ENCODE measurements at regions of chr19 and their contacts with region 1.

Region 1: DNA sequence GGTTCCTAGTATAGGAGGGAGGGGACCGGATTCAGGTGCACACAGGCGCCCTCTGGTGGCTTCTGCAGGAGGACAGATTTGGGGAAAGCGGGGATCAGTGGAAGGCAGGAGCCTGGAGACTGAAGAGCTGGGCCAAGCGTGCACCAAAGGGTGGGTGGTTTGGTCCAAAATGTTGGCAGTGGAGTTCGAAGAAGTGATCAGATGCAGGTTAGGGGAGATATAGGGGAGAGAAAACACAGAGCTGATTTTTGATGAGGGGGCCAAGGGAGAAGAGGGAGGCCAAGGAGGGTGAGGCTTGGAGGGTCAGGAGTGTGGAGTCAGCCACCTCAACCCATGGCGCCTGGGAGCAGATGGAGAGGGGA is 6.8 kb upstream of the CARM1 start:
- DNase-seq: peak; percentile 85
- H3K4me3 ChIP-seq: no peak overlapping the region
- H3K27ac ChIP-seq: no peak overlapping the region
- H3K4me1 ChIP-seq: peaks cover 8% of the 10 kb centered on the region
- H3K27me3 ChIP-seq: no peaks in the 10 kb centered on the region
- CTCF ChIP-seq: peak; percentile 97

Region 2: GRCh38 chr19:10551698-10552301 is 312.7 kb before region 1 on chr19:
- CTCF ChIA-PET with region 1: interaction called, 13 read pairs
- POLR2A ChIA-PET with region 1: no interaction called
- intact Hi-C with region 1: no loop called
- DNase-seq: peak; percentile 61
- H3K4me3 ChIP-seq: no peak overlapping the region
- H3K27ac ChIP-seq: no peak overlapping the region
- H3K4me1 ChIP-seq: no peaks in the 10 kb centered on the region
- H3K27me3 ChIP-seq: no peaks in the 10 kb centered on the region
- CTCF ChIP-seq: no peak

Region 3: DNA sequence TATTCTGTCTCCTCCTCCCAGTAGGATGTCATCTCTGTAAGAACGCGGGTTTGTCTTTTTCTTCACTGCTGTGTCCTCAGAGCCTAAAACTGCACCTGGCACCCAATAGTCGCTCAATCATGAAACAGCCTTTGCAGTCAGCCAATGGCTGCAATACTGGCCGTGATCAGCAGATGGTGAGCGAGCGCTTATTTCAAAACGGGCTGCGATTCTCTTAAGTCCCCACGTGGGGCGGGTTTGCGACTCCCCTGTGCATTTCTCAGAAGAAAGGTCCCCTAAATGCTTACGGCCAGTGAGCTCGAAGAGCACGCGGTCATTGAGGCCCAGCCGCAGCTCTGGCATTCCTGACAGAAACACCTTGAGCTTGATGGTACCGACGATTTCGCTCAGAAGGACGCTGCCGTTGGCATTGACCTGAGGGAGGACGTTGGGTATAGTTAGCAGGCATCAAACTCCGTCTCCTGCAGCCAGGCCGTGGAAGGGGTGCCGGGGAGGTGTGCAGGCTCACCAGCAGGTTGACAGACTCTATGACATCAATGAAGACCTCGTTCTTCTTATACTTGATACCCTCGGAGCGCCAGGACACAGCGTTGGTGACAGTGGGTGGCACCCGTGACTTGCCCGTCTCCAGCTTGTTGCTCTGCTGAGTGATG is 283.4 kb before region 1 on chr19:
- CTCF ChIA-PET with region 1: interaction called, 3 read pairs
- POLR2A ChIA-PET with region 1: no interaction called
- intact Hi-C with region 1: loop called (anchors 10 kb)
- DNase-seq: peak; percentile 95
- H3K4me3 ChIP-seq: no peak overlapping the region
- H3K27ac ChIP-seq: no peak overlapping the region
- H3K4me1 ChIP-seq: no peaks in the 10 kb centered on the region
- H3K27me3 ChIP-seq: no peaks in the 10 kb centered on the region
- CTCF ChIP-seq: peak; percentile 99

Region 4: DNA sequence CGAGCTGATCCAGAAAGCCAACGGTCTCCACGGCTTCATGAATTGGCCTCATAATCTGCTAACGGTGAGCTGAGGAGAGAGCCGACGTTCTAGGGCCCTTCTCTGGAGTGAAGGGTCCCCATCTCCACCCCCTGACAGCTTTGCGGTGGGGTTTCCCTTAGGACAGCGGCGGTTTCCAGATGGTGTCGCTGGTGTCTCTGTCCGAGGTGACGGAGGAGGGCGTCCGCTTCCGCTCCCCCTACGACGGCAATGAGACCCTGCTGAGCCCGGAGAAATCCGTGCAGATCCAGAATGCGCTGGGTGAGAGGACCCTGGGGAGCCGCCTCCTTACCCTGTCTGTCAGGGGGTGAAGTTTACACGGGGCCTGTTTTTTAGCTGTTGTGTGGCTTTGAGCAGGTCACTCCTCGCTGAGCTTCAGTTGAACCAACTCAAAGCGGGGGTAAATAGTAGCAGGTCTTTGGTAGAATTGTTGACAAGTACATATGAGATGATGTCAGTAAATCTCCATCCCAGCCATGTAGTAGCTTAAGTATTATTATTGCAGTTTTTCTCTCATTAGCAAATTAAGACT is 162.5 kb before region 1 on chr19:
- CTCF ChIA-PET with region 1: interaction called, 12 read pairs
- POLR2A ChIA-PET with region 1: no interaction called
- intact Hi-C with region 1: no loop called
- DNase-seq: peak; percentile 72
- H3K4me3 ChIP-seq: peak overlapping the region; percentile 76
- H3K27ac ChIP-seq: peak overlapping the region; percentile 70
- H3K4me1 ChIP-seq: no peaks in the 10 kb centered on the region
- H3K27me3 ChIP-seq: no peaks in the 10 kb centered on the region
- CTCF ChIP-seq: 0 out of 2 replicates have a peak, but pooled peaks have one; percentile 35

Region 5: GRCh38 chr19:10881403-10882107 is 17.0 kb after region 1 on chr19:
- CTCF ChIA-PET with region 1: no interaction called
- POLR2A ChIA-PET with region 1: no interaction called
- intact Hi-C with region 1: no loop called
- DNase-seq: no peak
- H3K4me3 ChIP-seq: no peak overlapping the region
- H3K27ac ChIP-seq: peak overlapping the region; percentile 21
- H3K4me1 ChIP-seq: peaks cover 35% of the 10 kb centered on the region
- H3K27me3 ChIP-seq: no peaks in the 10 kb centered on the region
- CTCF ChIP-seq: no peak

Measured in A673 (cell line).